Naive thymus-derived CD4-positive, alpha-beta T cell (primary cell): ENCODE measurements at regions of chr5 and their contacts with region 1.

Region 1: GRCh38 chr5:175718401-175719108 is 60.7 kb downstream of the HRH2 start:
- DNase-seq: peak; percentile 18 to 63 (median 45)
- ATAC-seq: peak; percentile 71
- H3K4me3 ChIP-seq: no peak overlapping the region
- H3K4me3 Mint-ChIP-seq: no peak overlapping the region
- H3K27ac ChIP-seq: no peak overlapping the region
- H3K27ac Mint-ChIP-seq: peak overlapping the region in 1 of 9 donors; percentile 44
- H3K4me1 ChIP-seq: no peaks in the 10 kb centered on the region
- H3K4me1 Mint-ChIP-seq: peaks cover 0 to 10% (median 4%) of the 10 kb centered on the region in 7 donors
- H3K27me3 ChIP-seq: no peaks in the 10 kb centered on the region
- H3K27me3 Mint-ChIP-seq: peaks cover 0 to 3% (median 0%) of the 10 kb centered on the region in 5 donors

Region 2: DNA sequence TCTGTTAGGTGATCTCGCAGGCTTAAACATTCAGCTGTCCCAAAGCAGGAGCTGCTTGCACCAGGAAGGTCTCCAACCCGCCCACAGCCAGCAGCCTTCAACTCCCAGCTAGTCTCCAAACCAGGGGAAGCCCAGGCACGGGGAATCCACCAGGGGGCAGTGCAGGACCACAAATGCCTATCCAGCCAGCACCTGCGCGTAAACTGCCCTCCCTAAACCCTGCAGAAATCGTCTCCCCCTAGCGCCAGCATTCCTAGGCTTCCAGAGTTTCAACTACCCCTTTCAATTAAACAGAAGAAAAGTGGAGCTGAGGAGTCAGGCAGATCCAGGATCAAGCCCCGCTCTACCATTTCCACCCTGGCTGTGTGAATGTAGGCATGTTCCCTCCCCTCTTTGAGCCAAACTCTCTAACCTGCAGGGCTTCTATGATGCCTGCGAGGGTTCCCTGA is 11.3 kb after region 1 on chr5:
- CTCF ChIA-PET with region 1: interaction called, 10 read pairs
- POLR2A ChIA-PET with region 1: no interaction called
- intact Hi-C with region 1: no loop called
- DNase-seq: peak; percentile 79 to 95 (median 90)
- ATAC-seq: peak; percentile 95
- H3K4me3 ChIP-seq: no peak overlapping the region
- H3K4me3 Mint-ChIP-seq: peak overlapping the region in 4 of 10 donors; percentile 1 to 15 (median 10)
- H3K27ac ChIP-seq: no peak overlapping the region
- H3K27ac Mint-ChIP-seq: peak overlapping the region in 1 of 9 donors; percentile 41
- H3K4me1 ChIP-seq: peaks cover 0 to 3% of the 10 kb centered on the region in 2 donors
- H3K4me1 Mint-ChIP-seq: peaks cover 0 to 9% (median 7%) of the 10 kb centered on the region in 7 donors
- H3K27me3 ChIP-seq: no peaks in the 10 kb centered on the region
- H3K27me3 Mint-ChIP-seq: peaks cover 13 to 39% (median 22%) of the 10 kb centered on the region in 5 donors

Region 3: DNA sequence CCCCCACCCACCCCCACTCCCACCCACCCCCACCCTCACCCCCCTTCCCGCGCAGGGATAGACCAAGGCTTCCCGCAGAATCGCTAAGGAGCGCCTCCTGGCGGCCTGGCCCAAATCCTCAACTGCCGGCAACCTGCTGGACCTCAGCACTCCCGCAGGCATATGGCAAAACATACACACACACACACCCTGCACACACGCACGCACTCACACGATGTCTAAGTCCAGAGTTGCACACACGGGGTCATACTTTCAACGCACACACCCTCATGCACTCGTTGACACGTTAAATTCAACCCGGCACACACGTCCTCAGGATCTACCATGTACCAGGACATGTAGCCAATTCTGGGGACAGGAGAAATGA is 154.5 kb after region 1 on chr5:
- CTCF ChIA-PET with region 1: no interaction called
- POLR2A ChIA-PET with region 1: no interaction called
- intact Hi-C with region 1: no loop called
- DNase-seq: peak in 1 of 9 donors; percentile 28
- ATAC-seq: no peak
- H3K4me3 ChIP-seq: no peak overlapping the region
- H3K4me3 Mint-ChIP-seq: peak overlapping the region in 8 of 10 donors; percentile 4 to 71 (median 43)
- H3K27ac ChIP-seq: no peak overlapping the region
- H3K27ac Mint-ChIP-seq: no peak overlapping the region
- H3K4me1 ChIP-seq: peaks cover 0 to 5% of the 10 kb centered on the region in 2 donors
- H3K4me1 Mint-ChIP-seq: peaks cover 6 to 19% (median 14%) of the 10 kb centered on the region in 7 donors
- H3K27me3 ChIP-seq: peaks cover 7 to 13% of the 10 kb centered on the region in 2 donors
- H3K27me3 Mint-ChIP-seq: peaks cover 48 to 76% (median 58%) of the 10 kb centered on the region in 5 donors